ENCODE measurements at regions of chr11 and their contacts with region 1.

Region 1: GRCh38 chr11:94973099-94973968 is at the starts of genes CWC15 and KDM4D:
- DNase-seq: peak; percentile 96
- H3K4me3 ChIP-seq: peak within 1 kb of the TSS; percentile 90
- H3K27ac ChIP-seq: peak within 1 kb of the TSS; percentile 42
- H3K4me1 ChIP-seq: peaks cover 9% of the 10 kb centered on the region
- H3K27me3 ChIP-seq: no peaks in the 10 kb centered on the region
- CTCF ChIP-seq: no peak
- total RNA-seq, gene CWC15: 40.4 to 47.5 TPM
- total RNA-seq, gene KDM4D: 0.20 TPM in 1 of 2 donors, not detected in the other

Region 2: DNA sequence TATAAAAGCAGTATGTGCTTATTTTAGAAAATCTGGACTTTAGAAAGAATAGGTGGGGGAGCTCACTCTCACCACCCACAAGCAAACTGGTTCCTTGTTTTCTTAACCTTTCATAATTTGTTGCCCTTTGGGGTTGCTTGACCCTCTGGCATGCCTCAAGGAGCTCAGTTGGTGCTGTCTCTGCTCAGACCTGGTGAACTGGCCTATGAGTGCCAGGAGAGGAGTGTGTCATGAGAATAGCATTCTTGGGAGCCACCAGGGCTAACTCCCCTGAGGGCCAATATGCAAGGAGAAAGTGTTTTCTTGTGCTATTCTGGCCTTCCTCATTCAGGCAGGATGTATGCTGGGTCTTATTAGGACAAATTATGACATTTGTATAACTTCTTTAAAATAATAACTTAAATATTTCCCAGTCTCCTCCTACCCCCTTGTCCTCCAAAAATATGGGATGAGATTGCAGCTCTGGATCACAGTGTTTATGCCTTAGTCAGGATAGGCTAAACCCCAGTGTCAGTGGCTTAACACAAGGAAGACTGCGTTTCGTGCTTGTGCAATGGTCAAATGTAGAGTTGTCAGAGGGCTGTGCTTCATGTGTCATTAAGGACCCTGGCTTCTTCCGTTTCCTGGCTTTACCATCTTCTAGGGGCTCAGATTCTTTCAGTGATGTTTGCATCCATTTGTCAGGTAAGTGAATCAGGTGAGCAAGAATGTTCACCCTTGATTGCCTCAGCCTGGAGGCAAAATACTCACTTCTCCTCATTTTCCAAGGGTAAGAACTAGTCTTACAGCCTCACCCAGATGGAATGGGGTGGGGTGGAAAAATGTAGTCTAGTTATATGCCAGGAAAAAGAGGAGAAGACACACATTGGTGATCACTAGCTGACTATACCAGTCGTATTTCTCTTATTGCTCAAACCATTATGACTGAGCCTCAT is 225.9 kb before region 1 on chr11:
- intact Hi-C with region 1: no loop called
- DNase-seq: no peak
- H3K4me3 ChIP-seq: no peak overlapping the region
- H3K27ac ChIP-seq: no peak overlapping the region
- H3K4me1 ChIP-seq: no peaks in the 10 kb centered on the region
- H3K27me3 ChIP-seq: peaks cover 2% of the 10 kb centered on the region
- CTCF ChIP-seq: no peak

Region 3: DNA sequence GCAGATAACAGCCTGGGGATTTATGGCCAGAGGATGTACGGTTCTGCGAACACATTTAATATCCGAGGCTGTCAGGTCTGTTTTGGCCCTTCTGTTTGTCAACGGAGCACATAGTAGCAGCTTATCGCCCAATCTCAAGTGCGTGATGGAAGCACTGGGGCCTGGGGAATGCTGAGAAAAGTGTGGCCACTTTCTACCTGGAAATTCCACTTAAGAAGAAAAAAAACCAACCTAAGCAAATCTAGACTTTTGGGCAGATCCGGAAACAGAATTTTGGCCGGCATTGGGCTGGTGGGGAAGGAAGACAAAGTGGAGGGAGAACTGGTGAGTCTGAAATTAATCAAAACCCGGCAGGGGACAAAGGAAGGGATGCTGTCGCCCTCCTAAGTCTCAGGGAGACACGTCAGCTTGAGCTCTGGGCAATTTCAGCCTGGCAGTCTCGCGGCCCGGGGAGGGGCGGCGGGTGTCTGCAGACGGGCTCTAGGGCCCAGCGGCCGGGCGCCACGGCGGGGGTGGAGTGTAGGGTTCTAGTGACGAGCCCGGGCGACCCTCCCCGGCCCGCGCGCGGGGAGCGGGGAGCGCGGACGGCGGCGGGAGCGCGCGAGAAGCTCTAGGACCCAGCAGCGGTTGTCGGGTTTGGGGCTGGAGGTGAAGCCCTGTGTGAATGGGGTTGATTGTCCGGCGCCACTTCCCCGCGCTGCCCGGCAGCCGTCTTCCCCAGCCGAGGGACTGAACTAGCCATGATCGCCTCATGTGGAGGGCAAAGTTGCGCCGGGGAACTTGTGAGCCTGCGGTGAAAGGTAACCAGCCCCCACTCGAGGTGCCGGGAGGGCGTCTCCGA is 205.4 kb before region 1 on chr11 and contains the start of gene AMOTL1:
- intact Hi-C with region 1: no loop called
- DNase-seq: peak; percentile 63
- H3K4me3 ChIP-seq: peak within 1 kb of the TSS; percentile 51
- H3K27ac ChIP-seq: peak within 1 kb of the TSS; percentile 85
- H3K4me1 ChIP-seq: no peaks in the 10 kb centered on the region
- H3K27me3 ChIP-seq: peaks cover 31% of the 10 kb centered on the region
- CTCF ChIP-seq: no peak
- total RNA-seq, gene AMOTL1: 3.1 to 13.9 TPM

Region 4: GRCh38 chr11:95067039-95067840 is 93.9 kb after region 1 on chr11:
- intact Hi-C with region 1: loop called (anchors 5 kb)
- DNase-seq: peak; percentile 77
- H3K4me3 ChIP-seq: peak overlapping the region; percentile 79
- H3K27ac ChIP-seq: peak overlapping the region; percentile 98
- H3K4me1 ChIP-seq: peaks cover 10% of the 10 kb centered on the region
- H3K27me3 ChIP-seq: no peaks in the 10 kb centered on the region
- CTCF ChIP-seq: peak; percentile 44

Region 5: GRCh38 chr11:95147364-95147905 is 174.1 kb after region 1 on chr11:
- intact Hi-C with region 1: loop called (anchors 10 kb)
- DNase-seq: no peak
- H3K4me3 ChIP-seq: no peak overlapping the region
- H3K27ac ChIP-seq: no peak overlapping the region
- H3K4me1 ChIP-seq: peaks cover 3% of the 10 kb centered on the region
- H3K27me3 ChIP-seq: no peaks in the 10 kb centered on the region
- CTCF ChIP-seq: no peak

Region 6: GRCh38 chr11:95789506-95790122 is 816.3 kb after region 1 on chr11 and contains the start of gene FAM76B:
- intact Hi-C with region 1: loop called (anchors 10 kb)
- DNase-seq: peak; percentile 97
- H3K4me3 ChIP-seq: peak within 1 kb of the TSS; percentile 91
- H3K27ac ChIP-seq: peak within 1 kb of the TSS; percentile 96
- H3K4me1 ChIP-seq: no peaks in the 10 kb centered on the region
- H3K27me3 ChIP-seq: no peaks in the 10 kb centered on the region
- CTCF ChIP-seq: no peak
- total RNA-seq, gene FAM76B: 17.5 to 22.1 TPM

Measured in colonic mucosa (tissue), 4 donors.